ENCODE measurements at regions of chr1 and their contacts with region 1.

Region 1: GRCh38 chr1:162035241-162035640 is 11.6 kb upstream of the OLFML2B start:
- DNase-seq: no peak
- H3K4me3 ChIP-seq: no peak overlapping the region
- CTCF ChIP-seq: no peak
- POLR2A ChIP-seq: no peak

Region 2: GRCh38 chr1:161799792-161800191 is 235.4 kb before region 1 on chr1:
- intact Hi-C with region 1: loop called (anchors 5 kb)
- DNase-seq: no peak
- H3K4me3 ChIP-seq: no peak overlapping the region
- CTCF ChIP-seq: no peak
- POLR2A ChIP-seq: no peak